Calu3 (cell line): ENCODE measurements at regions of chr14 and their contacts with region 1.

Region 1: DNA sequence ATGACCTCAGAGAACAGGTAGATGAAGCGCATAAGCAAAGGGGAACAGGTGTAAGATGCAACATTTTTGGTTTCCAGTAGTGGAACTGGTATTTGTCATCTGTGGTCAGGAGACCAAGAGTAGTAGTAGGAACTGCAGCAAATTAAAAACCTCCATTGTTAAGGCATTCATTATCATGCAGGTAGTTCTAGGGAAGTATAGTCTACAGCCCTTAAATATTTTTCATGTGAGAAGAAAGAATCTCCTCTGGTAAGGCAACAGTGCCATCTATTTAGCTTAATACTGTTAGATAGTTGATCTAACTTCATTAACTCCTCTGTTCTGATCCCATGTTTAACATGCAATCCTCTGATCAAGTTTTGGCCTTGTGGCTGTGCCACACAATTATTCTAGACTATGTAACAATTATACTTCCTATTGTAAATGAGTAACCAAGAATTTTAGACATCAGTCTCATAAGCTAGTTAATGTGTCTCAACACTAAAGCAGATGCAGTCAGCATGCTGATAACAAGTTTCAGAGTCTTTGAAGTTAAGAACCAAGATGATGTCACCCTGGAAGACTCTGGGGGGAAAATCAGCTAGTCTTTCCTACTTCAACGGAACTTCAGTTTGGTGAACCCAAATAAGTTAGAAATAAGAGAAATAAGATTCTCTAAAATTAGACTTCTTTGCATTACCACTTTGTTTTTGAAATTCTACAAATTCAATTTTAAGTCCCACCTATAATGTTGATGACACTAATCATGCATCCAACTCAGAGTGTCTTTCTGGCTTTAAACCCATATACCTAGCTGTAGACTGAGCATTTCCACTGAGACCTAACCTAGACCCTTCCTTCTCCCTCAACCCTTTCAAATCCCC is 70.9 kb downstream of the STXBP6 start:
- DNase-seq: peak; percentile 5
- H3K4me3 Mint-ChIP-seq: peak overlapping the region; percentile 1
- H3K27ac Mint-ChIP-seq: peak overlapping the region; percentile 41
- H3K4me1 Mint-ChIP-seq: peaks cover 51% of the 10 kb centered on the region
- H3K27me3 Mint-ChIP-seq: no peaks in the 10 kb centered on the region
- CTCF ChIP-seq: no peak

Region 2: GRCh38 chr14:24695265-24696241 is 283.5 kb before region 1 on chr14:
- CTCF ChIA-PET with region 1: no interaction called
- intact Hi-C with region 1: no loop called
- DNase-seq: no peak
- H3K4me3 Mint-ChIP-seq: no peak overlapping the region
- H3K27ac Mint-ChIP-seq: no peak overlapping the region
- H3K4me1 Mint-ChIP-seq: no peaks in the 10 kb centered on the region
- H3K27me3 Mint-ChIP-seq: peaks cover 12% of the 10 kb centered on the region
- CTCF ChIP-seq: no peak

Region 3: DNA sequence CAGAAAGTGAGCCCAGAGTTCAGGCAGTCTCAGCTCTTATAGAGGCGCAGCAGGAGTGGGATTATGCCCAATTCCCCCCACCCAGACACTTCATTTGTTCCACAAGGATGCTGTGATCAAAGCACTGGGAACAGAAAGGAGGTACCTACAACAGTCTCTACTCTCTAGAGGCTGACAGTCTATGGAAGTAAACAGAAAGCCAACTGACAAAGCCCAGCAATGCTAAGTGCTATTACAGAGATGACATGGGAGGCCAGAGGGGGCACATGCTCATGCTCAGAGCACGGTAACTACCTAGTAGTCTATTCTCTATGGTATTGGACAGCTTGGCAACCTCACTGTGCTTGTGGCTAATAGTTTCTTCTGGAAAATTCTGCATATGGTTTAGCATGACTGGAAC is 15.0 kb before region 1 on chr14:
- CTCF ChIA-PET with region 1: interaction called, 10 read pairs
- intact Hi-C with region 1: no loop called
- DNase-seq: no peak
- H3K4me3 Mint-ChIP-seq: no peak overlapping the region
- H3K27ac Mint-ChIP-seq: no peak overlapping the region
- H3K4me1 Mint-ChIP-seq: peaks cover 13% of the 10 kb centered on the region
- H3K27me3 Mint-ChIP-seq: no peaks in the 10 kb centered on the region
- CTCF ChIP-seq: no peak

Region 4: DNA sequence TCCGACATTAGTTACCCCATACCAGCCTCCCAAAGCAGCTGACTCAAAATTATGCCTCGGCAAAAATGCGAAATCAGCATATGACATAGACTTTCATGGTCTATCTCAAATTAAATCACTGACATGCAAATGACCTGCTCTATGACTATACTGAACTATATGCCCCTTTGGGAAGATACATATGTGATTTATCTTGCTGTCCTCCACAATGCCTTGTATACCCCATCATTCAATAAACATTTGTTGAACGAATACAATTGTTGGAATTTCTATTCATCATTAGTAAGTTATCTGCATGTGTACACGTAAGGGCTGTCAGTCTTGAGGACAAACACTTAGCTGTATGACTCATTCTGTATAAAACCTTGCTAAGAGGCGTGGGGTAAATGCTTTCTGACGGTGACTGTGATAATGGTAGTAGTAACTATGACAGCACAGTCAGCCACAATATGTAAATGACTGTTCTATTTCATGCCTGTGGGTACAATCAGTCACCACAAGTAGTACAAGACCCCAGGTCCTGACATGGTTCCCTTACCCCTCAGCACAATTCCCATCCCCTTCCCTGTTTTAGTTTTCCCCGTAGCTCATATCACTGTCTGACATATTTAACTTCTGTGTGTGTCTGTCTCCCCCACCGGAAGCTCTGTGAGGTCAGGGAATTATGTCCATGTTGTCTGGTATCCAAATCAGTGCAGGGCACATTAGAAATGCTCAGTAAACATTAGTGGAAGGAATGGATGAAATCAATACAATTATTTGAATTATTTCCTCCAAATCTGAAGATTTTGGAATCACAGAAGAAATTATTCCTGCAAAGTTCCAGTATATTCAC is 28.1 kb after region 1 on chr14:
- CTCF ChIA-PET with region 1: interaction called, 3 read pairs
- intact Hi-C with region 1: loop called (anchors 1 kb)
- DNase-seq: peak; percentile 37
- H3K4me3 Mint-ChIP-seq: peak overlapping the region; percentile 51
- H3K27ac Mint-ChIP-seq: peak overlapping the region; percentile 78
- H3K4me1 Mint-ChIP-seq: peaks cover 25% of the 10 kb centered on the region
- H3K27me3 Mint-ChIP-seq: no peaks in the 10 kb centered on the region
- CTCF ChIP-seq: no peak

Region 5: GRCh38 chr14:25381464-25381863 is 402.4 kb after region 1 on chr14:
- CTCF ChIA-PET with region 1: no interaction called
- intact Hi-C with region 1: no loop called
- DNase-seq: no peak
- H3K4me3 Mint-ChIP-seq: no peak overlapping the region
- H3K27ac Mint-ChIP-seq: no peak overlapping the region
- H3K4me1 Mint-ChIP-seq: no peaks in the 10 kb centered on the region
- H3K27me3 Mint-ChIP-seq: peaks cover 13% of the 10 kb centered on the region
- CTCF ChIP-seq: peak; percentile 25